Heart left ventricle (tissue), 16 donors: ENCODE measurements at regions of chr10 and their contacts with region 1.

Region 1: GRCh38 chr10:12720217-12720981 is 281.1 kb downstream of the CCDC3 start:
- DNase-seq: peak; percentile 41 to 80 (median 71)
- ATAC-seq: peak in 3 of 4 donors; percentile 81 to 89 (median 85)
- H3K4me3 ChIP-seq: no peak overlapping the region
- H3K27ac ChIP-seq: peak overlapping the region in 3 of 12 donors; percentile 4 to 54 (median 25)
- H3K4me1 ChIP-seq: peaks cover 0 to 28% (median 12%) of the 10 kb centered on the region in 12 donors
- H3K27me3 ChIP-seq: no peaks in the 10 kb centered on the region
- CTCF ChIP-seq: no peak
- POLR2A ChIP-seq: no peak

Region 2: GRCh38 chr10:13056456-13057077 is 336.2 kb after region 1 on chr10:
- intact Hi-C with region 1: loop called in 1 of 10 experiments (anchors 10 kb)
- DNase-seq: no peak
- ATAC-seq: no peak
- H3K4me3 ChIP-seq: no peak overlapping the region
- H3K27ac ChIP-seq: no peak overlapping the region
- H3K4me1 ChIP-seq: no peaks in the 10 kb centered on the region
- H3K27me3 ChIP-seq: peaks cover 0 to 8% (median 0%) of the 10 kb centered on the region in 9 donors
- CTCF ChIP-seq: peak in 7 of 12 donors; percentile 9 to 46 (median 39)
- POLR2A ChIP-seq: no peak